ENCODE measurements at regions of chr20 and their contacts with region 1.

Region 1: GRCh38 chr20:50980851-50981713 is 22.5 kb downstream of the MOCS3 start:
- DNase-seq: peak in 1 of 2 experiments; percentile 82
- H3K4me3 ChIP-seq: no peak overlapping the region
- H3K27ac ChIP-seq: no peak overlapping the region
- H3K4me1 ChIP-seq: peaks cover 0 to 2% (median 0%) of the 10 kb centered on the region in 4 experiments; a peak in 1 of 7 replicates
- H3K27me3 ChIP-seq: no peaks in the 10 kb centered on the region; a peak in 1 of 7 replicates
- CTCF ChIP-seq: peak; percentile 64 to 83 (median 76)
- EP300 ChIP-seq: no peak
- POLR2A ChIP-seq: no peak
- RAD21 ChIP-seq: peak; percentile 72 to 79

Region 2: DNA sequence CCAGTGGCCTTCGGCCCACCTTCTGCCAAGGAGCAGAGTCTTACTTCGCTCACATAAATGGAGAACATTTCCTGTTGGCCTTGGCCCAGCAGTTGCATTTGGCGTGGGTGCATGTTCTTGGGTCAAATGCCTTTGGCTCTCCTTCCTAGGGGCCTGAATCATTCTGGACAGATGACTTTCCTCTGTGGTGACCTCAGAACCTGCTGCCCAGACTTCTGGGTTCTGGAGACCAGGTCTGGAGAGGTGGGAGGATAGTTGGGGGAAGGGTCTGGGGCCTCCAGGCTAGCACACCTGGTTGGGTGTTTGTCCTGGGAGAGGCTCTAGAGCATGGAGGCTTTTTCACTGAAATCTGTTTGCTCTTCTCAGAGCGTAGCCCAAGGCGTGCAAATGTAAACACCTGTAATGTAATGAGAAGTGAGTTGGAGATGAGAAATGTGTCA is 156.9 kb before region 1 on chr20:
- CTCF ChIA-PET with region 1: no interaction called
- POLR2A ChIA-PET with region 1: no interaction called
- DNase-seq: no peak
- H3K4me3 ChIP-seq: no peak overlapping the region
- H3K27ac ChIP-seq: no peak overlapping the region
- H3K4me1 ChIP-seq: peaks cover 0 to 3% (median 1%) of the 10 kb centered on the region in 4 experiments; a peak in 2 of 7 replicates
- H3K27me3 ChIP-seq: no peaks in the 10 kb centered on the region
- CTCF ChIP-seq: no peak
- EP300 ChIP-seq: no peak
- POLR2A ChIP-seq: no peak
- RAD21 ChIP-seq: no peak

Region 3: DNA sequence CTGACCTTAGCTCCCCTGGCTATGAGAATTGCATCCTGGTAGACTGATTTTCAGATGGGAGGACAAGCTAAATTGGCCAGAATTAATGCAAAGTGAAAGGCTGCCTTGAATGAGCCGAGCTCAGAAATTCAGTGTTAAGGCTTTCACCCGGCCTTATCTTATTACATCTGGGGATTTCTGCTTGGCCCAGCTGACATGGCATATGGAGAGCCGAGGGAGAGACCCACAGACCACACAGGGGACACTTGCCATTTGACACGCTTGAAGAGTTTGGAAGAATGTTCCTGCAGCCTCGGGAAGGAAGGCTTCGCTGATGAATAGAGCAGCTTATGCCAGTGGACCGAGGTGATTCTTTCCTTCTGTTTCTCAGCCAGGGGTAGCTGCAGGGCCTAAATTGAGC is 13.5 kb before region 1 on chr20:
- CTCF ChIA-PET with region 1: interaction called, 22 read pairs
- POLR2A ChIA-PET with region 1: no interaction called
- DNase-seq: peak in 1 of 2 experiments; percentile 14
- H3K4me3 ChIP-seq: no peak overlapping the region
- H3K27ac ChIP-seq: no peak overlapping the region
- H3K4me1 ChIP-seq: peaks cover 0 to 2% (median 0%) of the 10 kb centered on the region in 4 experiments; a peak in 1 of 7 replicates
- H3K27me3 ChIP-seq: no peaks in the 10 kb centered on the region
- CTCF ChIP-seq: no peak
- EP300 ChIP-seq: no peak
- POLR2A ChIP-seq: no peak
- RAD21 ChIP-seq: no peak

Region 4: GRCh38 chr20:50992733-50993457 is 11.8 kb after region 1 on chr20:
- CTCF ChIA-PET with region 1: interaction called, 54 read pairs
- POLR2A ChIA-PET with region 1: interaction called, 3 read pairs
- DNase-seq: peak; percentile 66 to 82
- H3K4me3 ChIP-seq: peak overlapping the region in 3 of 4 experiments; percentile 8 to 40 (median 16); a peak in 4 of 8 replicates
- H3K27ac ChIP-seq: peak overlapping the region; percentile 44; the same call in 1 of the 2 replicates
- H3K4me1 ChIP-seq: peaks cover 3 to 19% (median 8%) of the 10 kb centered on the region in 4 experiments; a peak in 6 of 7 replicates
- H3K27me3 ChIP-seq: peaks cover 0 to 2% (median 0%) of the 10 kb centered on the region in 4 experiments; a peak in 1 of 7 replicates
- CTCF ChIP-seq: peak in 2 of 3 experiments; percentile 73 to 96; a peak in 3 of 4 replicates
- EP300 ChIP-seq: no peak
- POLR2A ChIP-seq: no peak
- RAD21 ChIP-seq: peak; percentile 89

Region 5: DNA sequence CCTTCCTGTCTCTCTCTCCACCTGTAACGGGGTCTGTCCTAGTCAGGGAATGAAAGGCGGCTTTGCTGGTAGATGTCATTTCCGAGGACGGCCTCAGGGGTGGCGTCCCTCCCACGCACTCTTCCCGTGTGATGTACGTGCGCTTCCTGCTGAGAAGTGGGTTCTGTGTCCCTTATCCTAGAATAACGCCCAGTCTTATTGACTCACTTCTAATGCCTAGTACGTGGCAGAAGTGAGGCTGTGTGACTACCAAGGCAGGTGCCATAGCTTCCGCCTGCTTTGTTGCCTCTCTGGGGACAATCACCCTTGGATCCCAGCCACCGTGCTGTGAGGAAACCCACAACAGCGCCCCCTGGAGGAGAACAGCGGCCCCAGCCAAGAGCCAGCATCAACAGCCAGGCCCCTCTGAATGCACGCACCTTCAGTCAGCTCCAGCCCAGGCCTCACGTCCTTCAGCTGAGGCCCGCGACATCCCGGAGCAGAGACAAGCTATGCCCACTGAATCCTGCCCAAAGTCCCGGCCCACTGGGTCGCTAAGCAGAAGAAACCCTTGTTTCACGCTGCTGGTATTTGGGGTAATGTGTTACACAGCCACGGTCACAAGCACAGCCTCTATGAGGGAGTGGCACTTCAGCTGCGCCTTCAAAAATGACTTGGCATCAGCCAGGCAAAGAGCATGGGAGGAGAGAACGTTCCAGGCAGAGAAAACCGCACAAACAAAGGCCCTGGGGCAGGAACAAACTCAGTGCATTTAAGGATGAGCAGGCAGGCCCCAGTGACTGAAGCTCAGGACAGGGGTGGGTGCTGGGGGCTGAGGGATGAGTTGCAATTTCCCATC is 337.2 kb after region 1 on chr20:
- CTCF ChIA-PET with region 1: interaction called, 165 read pairs
- POLR2A ChIA-PET with region 1: interaction called, 3 read pairs
- DNase-seq: peak; percentile 43 to 98
- H3K4me3 ChIP-seq: no peak overlapping the region
- H3K27ac ChIP-seq: no peak overlapping the region
- H3K4me1 ChIP-seq: peaks cover 0 to 21% (median 8%) of the 10 kb centered on the region in 4 experiments; a peak in 6 of 7 replicates
- H3K27me3 ChIP-seq: peaks cover 0 to 9% (median 6%) of the 10 kb centered on the region in 4 experiments; a peak in 5 of 7 replicates
- CTCF ChIP-seq: peak; percentile 86 to 94 (median 93)
- EP300 ChIP-seq: no peak
- POLR2A ChIP-seq: no peak
- RAD21 ChIP-seq: peak; percentile 63 to 75

Region 6: GRCh38 chr20:51326201-51326819 is 345.2 kb after region 1 on chr20:
- CTCF ChIA-PET with region 1: interaction called, 165 read pairs
- POLR2A ChIA-PET with region 1: no interaction called
- DNase-seq: peak in 1 of 2 experiments; percentile 79
- H3K4me3 ChIP-seq: no peak overlapping the region
- H3K27ac ChIP-seq: no peak overlapping the region
- H3K4me1 ChIP-seq: peaks cover 0 to 4% (median 1%) of the 10 kb centered on the region in 4 experiments; a peak in 3 of 7 replicates
- H3K27me3 ChIP-seq: no peaks in the 10 kb centered on the region; a peak in 1 of 7 replicates
- CTCF ChIP-seq: peak; percentile 74 to 92 (median 74)
- EP300 ChIP-seq: no peak
- POLR2A ChIP-seq: no peak
- RAD21 ChIP-seq: peak; percentile 70 to 83

Region 7: GRCh38 chr20:51385646-51386530 is 404.8 kb after region 1 on chr20:
- CTCF ChIA-PET with region 1: interaction called, 10 read pairs
- POLR2A ChIA-PET with region 1: no interaction called
- DNase-seq: no peak
- H3K4me3 ChIP-seq: no peak overlapping the region
- H3K27ac ChIP-seq: no peak overlapping the region
- H3K4me1 ChIP-seq: peaks cover 2 to 18% (median 10%) of the 10 kb centered on the region in 4 experiments; a peak in 6 of 7 replicates
- H3K27me3 ChIP-seq: no peaks in the 10 kb centered on the region; a peak in 1 of 7 replicates
- CTCF ChIP-seq: peak; percentile 51 to 82 (median 72)
- EP300 ChIP-seq: no peak
- POLR2A ChIP-seq: no peak
- RAD21 ChIP-seq: peak; percentile 74 to 85

Region 8: GRCh38 chr20:51595058-51595532 is 614.0 kb after region 1 on chr20:
- CTCF ChIA-PET with region 1: interaction called, 13 read pairs
- POLR2A ChIA-PET with region 1: no interaction called
- DNase-seq: peak; percentile 56 to 81
- H3K4me3 ChIP-seq: no peak overlapping the region
- H3K27ac ChIP-seq: no peak overlapping the region
- H3K4me1 ChIP-seq: peaks cover 0 to 8% (median 2%) of the 10 kb centered on the region in 4 experiments; a peak in 5 of 7 replicates
- H3K27me3 ChIP-seq: no peaks in the 10 kb centered on the region
- CTCF ChIP-seq: peak; percentile 92 to 96 (median 94)
- EP300 ChIP-seq: 0 out of 3 replicates have a peak, but pooled peaks of 1 of the 2 experiments have one; percentile 16
- POLR2A ChIP-seq: no peak
- RAD21 ChIP-seq: peak; percentile 96